ENCODE measurements at regions of chr1 and their contacts with region 1.

Region 1: GRCh38 chr1:175154629-175155472 is 37.7 kb downstream of the KIAA0040 start:
- DNase-seq: peak in 9 of 10 donors; percentile 46 to 93 (median 70)

Region 2: GRCh38 chr1:175124861-175125260 is 30.0 kb before region 1 on chr1:
- intact Hi-C with region 1: no loop called
- DNase-seq: no peak

Region 3: GRCh38 chr1:175319418-175320230 is 164.8 kb after region 1 on chr1:
- intact Hi-C with region 1: loop called (anchors 2 kb)
- DNase-seq: peak; percentile 32 to 93 (median 66)

Region 4: DNA sequence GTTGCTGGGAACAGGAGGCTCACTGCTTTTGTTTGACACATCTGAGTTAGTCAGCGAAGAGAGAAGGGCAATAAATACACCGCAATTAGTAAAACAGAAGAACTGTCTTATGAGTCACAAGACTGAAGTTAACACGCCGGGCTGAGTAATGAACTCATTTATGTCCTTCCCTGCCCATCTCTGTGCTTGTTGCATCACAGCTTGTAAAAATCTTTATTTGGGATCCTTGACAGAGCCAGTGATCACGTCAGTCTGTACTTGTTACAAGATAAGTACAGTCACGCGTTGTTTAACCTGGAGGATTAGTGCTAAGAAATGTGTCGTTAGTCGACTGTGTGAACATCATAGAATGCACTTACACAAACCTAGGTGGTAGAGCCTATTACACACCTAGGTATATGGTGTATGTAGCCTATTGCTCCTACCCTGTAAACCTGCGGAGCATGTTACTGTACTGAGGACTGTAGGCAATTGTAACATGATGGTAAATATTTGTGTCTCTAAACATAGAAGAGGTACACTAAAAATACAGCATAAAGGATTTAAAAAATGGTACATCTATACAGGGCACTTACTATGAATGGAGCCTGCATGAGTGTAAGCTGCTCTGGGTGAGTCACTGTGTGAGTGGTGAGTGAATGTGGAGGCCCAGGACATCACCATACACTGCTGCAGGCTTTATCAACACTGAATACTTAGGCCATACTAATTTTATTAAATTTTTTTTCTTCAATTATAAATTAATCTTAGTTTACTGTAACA is 316.4 kb after region 1 on chr1:
- intact Hi-C with region 1: loop called (anchors 10 kb)
- DNase-seq: no peak

Region 5: DNA sequence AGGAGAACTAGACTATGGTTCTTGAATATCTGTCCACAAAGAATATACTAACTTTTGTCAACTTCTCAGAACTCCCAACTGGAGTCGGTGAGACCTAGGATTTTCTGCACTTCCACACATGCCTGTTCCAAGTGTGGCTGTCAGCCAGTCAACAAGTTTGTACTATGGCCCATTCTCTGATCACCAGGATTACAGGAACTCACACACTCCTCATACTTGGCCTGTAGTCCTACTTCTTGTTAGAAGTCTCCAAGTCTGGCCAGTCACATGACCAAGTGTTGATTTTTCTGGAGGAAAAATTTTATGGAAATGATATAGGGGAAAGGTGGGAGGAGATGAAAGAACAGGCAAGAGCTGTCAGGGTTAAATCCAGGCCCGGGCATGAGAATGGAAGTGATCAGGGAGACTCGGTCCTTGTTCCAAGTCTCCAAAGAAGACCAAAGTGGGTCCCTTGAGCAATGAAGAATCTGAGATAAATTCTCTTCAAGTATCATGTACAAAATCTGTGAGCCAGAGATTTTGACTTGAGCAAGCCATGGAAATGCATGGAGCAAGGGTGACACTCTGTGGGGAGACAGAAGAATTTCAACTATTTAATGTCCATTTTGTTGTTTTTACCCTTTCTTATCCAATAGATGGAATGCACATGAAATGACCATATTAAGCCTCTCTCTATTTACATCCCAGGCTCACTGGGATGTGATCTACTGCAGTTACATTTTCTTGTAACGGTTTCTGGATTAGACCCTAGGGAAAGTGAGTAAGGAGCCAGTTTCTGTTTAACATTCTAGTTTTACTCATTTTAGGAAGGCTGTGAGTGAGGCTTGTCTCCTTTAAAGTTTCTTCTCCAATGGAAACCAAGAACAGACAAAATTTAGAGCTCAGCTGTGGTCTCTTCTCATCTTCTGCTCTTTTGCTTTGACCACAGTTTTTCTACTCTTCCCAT is 1688.8 kb after region 1 on chr1:
- intact Hi-C with region 1: loop called (anchors 5 kb)
- DNase-seq: peak in 5 of 10 donors; percentile 21 to 79 (median 25)

Region 6: GRCh38 chr1:176880954-176881595 is 1726.2 kb after region 1 on chr1:
- intact Hi-C with region 1: loop called (anchors 5 kb)
- DNase-seq: peak; percentile 44 to 94 (median 79)